H1 (cell line): ENCODE measurements at regions of chr7 and their contacts with region 1.

Region 1: DNA sequence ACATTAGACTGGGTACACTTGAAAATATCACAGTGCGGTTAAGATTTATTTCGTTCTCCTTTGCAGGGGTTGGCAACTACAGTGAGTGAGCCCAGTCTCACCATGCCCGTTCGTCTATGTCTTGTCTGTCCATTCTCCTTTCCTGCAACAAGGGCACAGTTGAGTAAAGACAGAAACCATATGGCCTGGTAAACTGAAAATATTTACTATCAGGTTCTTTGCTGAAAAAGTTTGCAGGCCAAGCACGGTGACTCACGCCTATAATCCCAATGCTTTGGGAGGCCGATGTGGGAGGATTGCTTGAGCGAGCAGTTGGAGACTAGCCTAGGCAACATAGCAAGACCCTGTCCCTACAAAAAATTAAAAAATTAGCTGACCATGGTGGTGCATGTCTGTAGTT is 11.4 kb upstream of the KCTD7 start:
- DNase-seq: no peak
- H3K4me3 ChIP-seq: no peak overlapping the region
- H3K27ac ChIP-seq: no peak overlapping the region
- H3K4me1 ChIP-seq: peaks cover 0 to 12% (median 5%) of the 10 kb centered on the region in 4 experiments; a peak in 5 of 7 replicates
- H3K27me3 ChIP-seq: no peaks in the 10 kb centered on the region
- CTCF ChIP-seq: no peak
- EP300 ChIP-seq: no peak
- POLR2A ChIP-seq: no peak
- RAD21 ChIP-seq: no peak

Region 2: DNA sequence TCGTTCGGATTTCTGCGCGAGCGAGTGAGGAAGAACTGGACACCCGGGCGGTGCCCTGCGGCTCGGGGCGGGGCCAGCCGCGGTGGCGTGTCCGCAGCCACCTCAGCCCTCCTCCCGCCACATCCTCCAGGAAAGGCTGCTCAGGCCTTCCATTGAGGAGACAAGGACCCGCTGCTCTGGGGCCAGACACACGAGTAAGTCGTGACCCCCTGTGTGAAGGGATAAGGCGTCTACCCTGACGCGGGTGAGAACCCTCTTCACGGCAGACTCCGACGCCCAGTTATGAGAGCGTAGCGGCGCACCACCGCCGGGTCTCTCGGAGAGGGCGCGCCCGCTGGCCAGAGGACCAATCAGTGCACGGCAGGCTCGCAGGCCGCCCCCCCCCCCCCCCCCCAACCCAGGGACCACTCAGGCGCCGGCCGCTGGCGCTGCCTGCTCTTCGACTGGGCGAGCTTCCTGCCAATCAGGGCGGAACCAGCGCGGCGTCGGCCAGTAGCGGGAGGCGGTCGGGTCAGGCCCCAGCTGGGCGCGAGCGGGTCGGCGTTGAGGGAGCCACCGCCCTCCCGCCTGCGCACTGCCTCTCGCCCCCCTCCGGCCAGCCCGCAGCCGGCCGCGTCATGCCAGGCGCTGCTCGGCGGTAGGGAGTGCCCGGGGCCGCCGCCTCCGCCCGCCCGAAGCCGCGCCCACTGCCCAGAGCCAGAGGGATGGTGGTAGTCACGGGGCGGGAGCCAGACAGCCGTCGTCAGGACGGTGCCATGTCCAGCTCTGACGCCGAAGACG is 11.3 kb after region 1 on chr7 and contains the start of gene KCTD7:
- CTCF ChIA-PET with region 1: interaction called, 3 read pairs
- POLR2A ChIA-PET with region 1: interaction called, 25 read pairs
- DNase-seq: peak; percentile 91 to 94
- H3K4me3 ChIP-seq: peak within 1 kb of the TSS; percentile 76 to 97 (median 90)
- H3K27ac ChIP-seq: peak within 1 kb of the TSS; percentile 81
- H3K4me1 ChIP-seq: no peaks in the 10 kb centered on the region
- H3K27me3 ChIP-seq: no peaks in the 10 kb centered on the region
- CTCF ChIP-seq: peak in 1 of 3 experiments; percentile 7; a peak in 1 of 4 replicates
- EP300 ChIP-seq: no peak
- POLR2A ChIP-seq: peak; percentile 92 to 93
- RAD21 ChIP-seq: no peak; a peak in 1 of 4 replicates
- total RNA-seq, gene KCTD7: 7.7 and 8.6 TPM in 2 replicates